Naive thymus-derived CD4-positive, alpha-beta T cell (primary cell): ENCODE measurements at regions of chr17 and their contacts with region 1.

Region 1: GRCh38 chr17:7435221-7435675 is at the start of gene TMEM102:
- DNase-seq: peak; percentile 92 to 99 (median 99)
- ATAC-seq: peak; percentile 94
- H3K4me3 ChIP-seq: peak within 1 kb of the TSS; percentile 65
- H3K4me3 Mint-ChIP-seq: peak within 1 kb of the TSS; percentile 86 to 96 (median 94)
- H3K27ac ChIP-seq: peak within 1 kb of the TSS; percentile 83
- H3K27ac Mint-ChIP-seq: peak within 1 kb of the TSS; percentile 89 to 97 (median 95)
- H3K4me1 ChIP-seq: peaks cover 16 to 38% of the 10 kb centered on the region in 2 donors
- H3K4me1 Mint-ChIP-seq: peaks cover 26 to 42% (median 36%) of the 10 kb centered on the region in 7 donors
- H3K27me3 ChIP-seq: peaks cover 0 to 9% of the 10 kb centered on the region in 2 donors
- H3K27me3 Mint-ChIP-seq: peaks cover 11 to 13% (median 12%) of the 10 kb centered on the region in 5 donors
- total RNA-seq, gene TMEM102: 8.2 to 19.1 (median 16.5) TPM

Region 2: GRCh38 chr17:7014261-7014994 is 420.8 kb before region 1 on chr17:
- CTCF ChIA-PET with region 1: no interaction called
- POLR2A ChIA-PET with region 1: no interaction called
- intact Hi-C with region 1: loop called in 1 of 2 experiments (anchors 10 kb)
- DNase-seq: peak; percentile 96 to 98 (median 97)
- ATAC-seq: peak; percentile 89
- H3K4me3 ChIP-seq: peak overlapping the region; percentile 97
- H3K4me3 Mint-ChIP-seq: peak overlapping the region; percentile 85 to 99 (median 97)
- H3K27ac ChIP-seq: peak overlapping the region; percentile 99
- H3K27ac Mint-ChIP-seq: peak overlapping the region; percentile 97 to 100 (median 100)
- H3K4me1 ChIP-seq: peaks cover 31 to 52% of the 10 kb centered on the region in 2 donors
- H3K4me1 Mint-ChIP-seq: peaks cover 30 to 81% (median 63%) of the 10 kb centered on the region in 7 donors
- H3K27me3 ChIP-seq: no peaks in the 10 kb centered on the region
- H3K27me3 Mint-ChIP-seq: no peaks in the 10 kb centered on the region

Region 3: GRCh38 chr17:7280519-7281429 is 154.5 kb before region 1 on chr17:
- CTCF ChIA-PET with region 1: interaction called, 8 read pairs
- POLR2A ChIA-PET with region 1: no interaction called
- intact Hi-C with region 1: loop called in 1 of 2 experiments (anchors 1 kb)
- DNase-seq: peak; percentile 76 to 88 (median 85)
- ATAC-seq: peak; percentile 95
- H3K4me3 ChIP-seq: peak overlapping the region; percentile 66
- H3K4me3 Mint-ChIP-seq: peak overlapping the region; percentile 77 to 87 (median 84)
- H3K27ac ChIP-seq: no peak overlapping the region
- H3K27ac Mint-ChIP-seq: peak overlapping the region in 7 of 9 donors; percentile 6 to 88 (median 51)
- H3K4me1 ChIP-seq: peaks cover 11 to 23% of the 10 kb centered on the region in 2 donors
- H3K4me1 Mint-ChIP-seq: peaks cover 14 to 31% (median 21%) of the 10 kb centered on the region in 7 donors
- H3K27me3 ChIP-seq: no peaks in the 10 kb centered on the region
- H3K27me3 Mint-ChIP-seq: peaks cover 6 to 44% (median 17%) of the 10 kb centered on the region in 5 donors

Region 4: DNA sequence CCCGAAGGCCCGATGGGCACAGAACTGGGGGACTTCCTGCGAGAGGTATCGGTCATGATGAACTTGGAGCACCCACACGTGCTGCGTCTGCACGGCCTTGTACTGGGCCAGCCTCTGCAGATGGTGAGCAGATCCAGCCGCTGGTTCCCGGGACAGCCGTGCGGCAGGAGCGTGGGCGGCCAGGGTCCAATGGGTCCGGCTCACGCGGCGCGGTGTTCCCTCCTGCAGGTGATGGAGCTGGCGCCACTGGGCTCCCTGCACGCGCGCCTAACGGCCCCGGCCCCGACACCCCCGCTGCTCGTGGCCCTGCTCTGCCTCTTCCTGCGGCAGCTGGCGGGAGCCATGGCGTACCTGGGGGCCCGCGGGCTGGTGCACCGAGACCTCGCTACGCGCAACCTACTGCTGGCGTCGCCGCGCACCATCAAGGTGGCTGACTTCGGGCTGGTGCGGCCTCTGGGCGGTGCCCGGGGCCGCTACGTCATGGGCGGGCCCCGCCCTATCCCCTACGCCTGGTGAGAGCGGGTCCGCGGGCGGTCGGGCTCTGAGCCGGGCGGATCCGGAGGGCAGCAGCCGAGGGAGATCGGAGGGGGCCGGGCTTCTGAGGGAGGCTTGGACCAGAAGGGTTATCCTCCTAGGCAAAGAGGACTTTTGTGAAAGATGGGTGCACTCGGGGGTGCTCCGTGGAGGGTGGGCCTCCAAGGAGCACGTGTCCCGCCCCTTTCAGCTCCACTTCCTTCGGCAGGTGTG is 51.3 kb before region 1 on chr17:
- CTCF ChIA-PET with region 1: interaction called, 6 read pairs
- POLR2A ChIA-PET with region 1: interaction called, 19 read pairs
- intact Hi-C with region 1: loop called in 1 of 2 experiments (anchors 1 kb)
- DNase-seq: peak; percentile 74 to 88 (median 86)
- ATAC-seq: peak; percentile 98
- H3K4me3 ChIP-seq: peak overlapping the region; percentile 82
- H3K4me3 Mint-ChIP-seq: peak overlapping the region; percentile 74 to 89 (median 82)
- H3K27ac ChIP-seq: peak overlapping the region; percentile 94
- H3K27ac Mint-ChIP-seq: peak overlapping the region; percentile 73 to 96 (median 94)
- H3K4me1 ChIP-seq: peaks cover 10 to 13% of the 10 kb centered on the region in 2 donors
- H3K4me1 Mint-ChIP-seq: peaks cover 10 to 23% (median 15%) of the 10 kb centered on the region in 7 donors
- H3K27me3 ChIP-seq: peaks cover 0 to 11% of the 10 kb centered on the region in 2 donors
- H3K27me3 Mint-ChIP-seq: peaks cover 27 to 37% (median 33%) of the 10 kb centered on the region in 5 donors

Region 5: GRCh38 chr17:7502987-7503386 is 67.7 kb after region 1 on chr17:
- CTCF ChIA-PET with region 1: interaction called, 6 read pairs
- POLR2A ChIA-PET with region 1: interaction called, 13 read pairs
- intact Hi-C with region 1: loop called in 1 of 2 experiments (anchors 1 kb)
- DNase-seq: peak in 2 of 9 donors; percentile 17 to 27
- ATAC-seq: peak; percentile 43
- H3K4me3 ChIP-seq: no peak overlapping the region
- H3K4me3 Mint-ChIP-seq: no peak overlapping the region
- H3K27ac ChIP-seq: no peak overlapping the region
- H3K27ac Mint-ChIP-seq: no peak overlapping the region
- H3K4me1 ChIP-seq: no peaks in the 10 kb centered on the region
- H3K4me1 Mint-ChIP-seq: peaks cover 0 to 3% (median 0%) of the 10 kb centered on the region in 7 donors
- H3K27me3 ChIP-seq: no peaks in the 10 kb centered on the region
- H3K27me3 Mint-ChIP-seq: no peaks in the 10 kb centered on the region

Region 6: DNA sequence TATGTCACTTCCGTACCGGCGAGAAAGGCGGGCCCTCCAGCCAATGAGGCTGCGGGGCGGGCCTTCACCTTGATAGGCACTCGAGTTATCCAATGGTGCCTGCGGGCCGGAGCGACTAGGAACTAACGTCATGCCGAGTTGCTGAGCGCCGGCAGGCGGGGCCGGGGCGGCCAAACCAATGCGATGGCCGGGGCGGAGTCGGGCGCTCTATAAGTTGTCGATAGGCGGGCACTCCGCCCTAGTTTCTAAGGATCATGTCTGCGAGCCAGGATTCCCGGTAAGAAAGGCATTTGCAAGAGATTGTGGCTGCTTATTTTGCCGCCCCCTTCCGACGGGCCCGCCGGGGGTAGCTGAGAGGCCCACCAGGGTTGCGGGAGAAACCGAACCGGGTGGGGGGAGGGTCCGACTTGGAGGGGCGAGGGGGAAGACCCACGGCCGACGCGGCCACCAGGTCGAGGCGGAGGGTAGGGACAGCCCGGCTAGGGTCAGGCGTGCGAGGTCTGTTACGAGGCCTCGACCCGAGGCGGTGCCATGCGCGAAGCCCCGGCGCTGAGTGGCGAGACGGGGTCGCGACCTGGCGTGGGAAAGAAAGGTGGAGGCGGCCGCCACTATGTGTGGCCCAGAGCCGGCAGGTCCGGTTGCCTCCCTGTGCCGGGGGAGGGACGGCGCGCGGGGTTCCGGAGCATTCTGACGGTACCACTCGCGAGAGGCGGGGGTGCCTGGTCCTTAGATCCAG is 137.5 kb after region 1 on chr17:
- CTCF ChIA-PET with region 1: no interaction called
- POLR2A ChIA-PET with region 1: interaction called, 21 read pairs
- intact Hi-C with region 1: loop called (anchors 1 kb)
- DNase-seq: peak; percentile 99 to 100 (median 100)
- ATAC-seq: peak; percentile 91
- H3K4me3 ChIP-seq: peak overlapping the region; percentile 91
- H3K4me3 Mint-ChIP-seq: peak overlapping the region; percentile 90 to 100 (median 98)
- H3K27ac ChIP-seq: peak overlapping the region; percentile 96
- H3K27ac Mint-ChIP-seq: peak overlapping the region; percentile 94 to 99 (median 98)
- H3K4me1 ChIP-seq: peaks cover 21 to 31% of the 10 kb centered on the region in 2 donors
- H3K4me1 Mint-ChIP-seq: peaks cover 9 to 62% (median 48%) of the 10 kb centered on the region in 7 donors
- H3K27me3 ChIP-seq: no peaks in the 10 kb centered on the region
- H3K27me3 Mint-ChIP-seq: peaks cover 0 to 5% (median 0%) of the 10 kb centered on the region in 5 donors

Region 7: DNA sequence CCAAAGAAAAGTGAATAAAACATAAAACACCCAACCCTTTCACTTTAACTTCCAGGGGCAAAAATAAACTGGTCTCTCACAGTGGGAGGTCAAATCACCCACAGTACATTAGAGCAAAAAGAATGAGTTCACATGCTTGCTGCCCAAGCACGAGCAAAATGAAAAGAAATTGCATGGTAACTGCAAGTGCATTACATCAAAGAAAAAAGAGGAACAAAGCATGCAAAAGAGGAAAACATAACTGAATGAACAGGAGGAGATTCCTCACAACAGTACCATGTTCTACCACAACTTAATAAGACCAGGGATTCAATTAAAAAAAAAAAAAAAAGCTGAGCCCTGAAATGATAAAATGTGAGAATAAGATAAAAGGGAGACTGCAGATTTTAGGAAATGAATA is 294.6 kb after region 1 on chr17:
- CTCF ChIA-PET with region 1: no interaction called
- POLR2A ChIA-PET with region 1: no interaction called
- intact Hi-C with region 1: no loop called
- DNase-seq: no peak
- ATAC-seq: peak; percentile 37
- H3K4me3 ChIP-seq: no peak overlapping the region
- H3K4me3 Mint-ChIP-seq: no peak overlapping the region
- H3K27ac ChIP-seq: no peak overlapping the region
- H3K27ac Mint-ChIP-seq: no peak overlapping the region
- H3K4me1 ChIP-seq: no peaks in the 10 kb centered on the region
- H3K4me1 Mint-ChIP-seq: no peaks in the 10 kb centered on the region
- H3K27me3 ChIP-seq: no peaks in the 10 kb centered on the region
- H3K27me3 Mint-ChIP-seq: peaks cover 8 to 26% (median 13%) of the 10 kb centered on the region in 5 donors